WTC11 (cell line): ENCODE measurements at regions of chr9 and their contacts with region 1.

Region 1: DNA sequence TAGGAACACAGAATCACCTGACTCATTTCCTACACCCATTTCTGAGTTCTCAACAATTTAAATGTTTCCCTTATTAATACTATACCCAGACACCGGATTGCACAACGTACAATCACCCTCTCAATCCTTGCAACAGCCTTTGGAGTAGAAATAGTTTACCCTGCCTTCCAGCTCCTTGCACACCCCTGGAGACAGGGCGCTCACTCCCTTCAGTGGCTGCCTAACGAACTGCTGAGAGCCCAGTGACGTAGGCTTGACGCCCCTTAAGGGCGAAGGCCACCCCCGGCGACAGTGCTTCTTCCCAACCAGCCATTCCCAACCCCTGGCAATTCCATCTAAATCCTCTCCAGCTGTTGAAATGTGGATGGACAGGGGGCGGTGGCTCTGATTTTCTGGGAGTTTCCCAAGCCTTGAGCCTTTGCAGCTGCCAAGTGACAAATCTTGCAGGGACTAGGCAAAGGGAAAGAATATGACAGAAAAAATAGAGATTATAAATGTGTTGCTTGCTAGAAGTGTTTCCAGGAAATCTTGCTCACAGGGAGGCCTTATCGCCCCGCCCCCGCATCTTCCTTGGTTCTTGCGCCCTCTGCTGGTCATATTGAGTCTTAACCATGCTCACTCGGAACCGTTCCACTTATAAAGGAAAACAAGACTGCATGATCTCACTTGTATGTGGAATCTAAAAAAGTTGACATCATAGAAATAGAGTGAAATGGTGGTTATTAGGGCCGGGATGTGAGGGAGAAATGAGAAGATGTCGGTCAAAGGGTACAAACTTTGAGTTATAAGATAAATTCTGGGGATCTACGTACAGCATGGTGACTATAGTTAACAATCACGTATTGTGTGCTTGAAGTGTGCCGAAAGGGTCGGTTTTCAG is 7.6 kb upstream of the BARX1 start:
- DNase-seq: peak; percentile 70
- ATAC-seq: peak; percentile 16; the same call in 1 of the 2 replicates
- H3K4me3 Mint-ChIP-seq: no peak overlapping the region
- H3K27ac Mint-ChIP-seq: no peak overlapping the region
- H3K4me1 Mint-ChIP-seq: peaks cover 30% of the 10 kb centered on the region
- H3K27me3 Mint-ChIP-seq: peaks cover 53% of the 10 kb centered on the region
- CTCF ChIP-seq: peak; percentile 88

Region 2: GRCh38 chr9:93682232-93682968 is 280.4 kb before region 1 on chr9:
- CTCF ChIA-PET with region 1: interaction called, 25 read pairs
- POLR2A ChIA-PET with region 1: no interaction called
- DNase-seq: peak; percentile 94
- ATAC-seq: peak; percentile 76
- H3K4me3 Mint-ChIP-seq: no peak overlapping the region
- H3K27ac Mint-ChIP-seq: 0 out of 2 replicates have a peak overlapping the region, but pooled peaks have one; percentile 21
- H3K4me1 Mint-ChIP-seq: peaks cover 3% of the 10 kb centered on the region
- H3K27me3 Mint-ChIP-seq: no peaks in the 10 kb centered on the region
- CTCF ChIP-seq: peak; percentile 89

Region 3: GRCh38 chr9:93945400-93946337 is 17.1 kb before region 1 on chr9:
- CTCF ChIA-PET with region 1: interaction called, 30 read pairs
- POLR2A ChIA-PET with region 1: interaction called, 7 read pairs
- DNase-seq: no peak
- ATAC-seq: no peak; the same call in 1 of the 2 replicates
- H3K4me3 Mint-ChIP-seq: peak overlapping the region; percentile 69
- H3K27ac Mint-ChIP-seq: no peak overlapping the region
- H3K4me1 Mint-ChIP-seq: peaks cover 58% of the 10 kb centered on the region
- H3K27me3 Mint-ChIP-seq: peaks cover 99% of the 10 kb centered on the region
- CTCF ChIP-seq: no peak

Region 4: GRCh38 chr9:93978551-93978950 is 15.8 kb after region 1 on chr9:
- CTCF ChIA-PET with region 1: interaction called, 10 read pairs
- POLR2A ChIA-PET with region 1: no interaction called
- DNase-seq: no peak
- ATAC-seq: no peak
- H3K4me3 Mint-ChIP-seq: no peak overlapping the region
- H3K27ac Mint-ChIP-seq: no peak overlapping the region
- H3K4me1 Mint-ChIP-seq: 0 out of 2 replicates have a peak, but pooled peaks cover under 1% of the 10 kb centered on the region
- H3K27me3 Mint-ChIP-seq: no peaks in the 10 kb centered on the region
- CTCF ChIP-seq: no peak

Region 5: GRCh38 chr9:94065535-94065961 is 102.7 kb after region 1 on chr9:
- CTCF ChIA-PET with region 1: no interaction called
- POLR2A ChIA-PET with region 1: no interaction called
- DNase-seq: peak; percentile 78
- ATAC-seq: peak; percentile 87
- H3K4me3 Mint-ChIP-seq: no peak overlapping the region
- H3K27ac Mint-ChIP-seq: no peak overlapping the region; the same call in 1 of the 2 replicates
- H3K4me1 Mint-ChIP-seq: peaks cover 5% of the 10 kb centered on the region
- H3K27me3 Mint-ChIP-seq: no peaks in the 10 kb centered on the region
- CTCF ChIP-seq: peak; percentile 84

Region 6: DNA sequence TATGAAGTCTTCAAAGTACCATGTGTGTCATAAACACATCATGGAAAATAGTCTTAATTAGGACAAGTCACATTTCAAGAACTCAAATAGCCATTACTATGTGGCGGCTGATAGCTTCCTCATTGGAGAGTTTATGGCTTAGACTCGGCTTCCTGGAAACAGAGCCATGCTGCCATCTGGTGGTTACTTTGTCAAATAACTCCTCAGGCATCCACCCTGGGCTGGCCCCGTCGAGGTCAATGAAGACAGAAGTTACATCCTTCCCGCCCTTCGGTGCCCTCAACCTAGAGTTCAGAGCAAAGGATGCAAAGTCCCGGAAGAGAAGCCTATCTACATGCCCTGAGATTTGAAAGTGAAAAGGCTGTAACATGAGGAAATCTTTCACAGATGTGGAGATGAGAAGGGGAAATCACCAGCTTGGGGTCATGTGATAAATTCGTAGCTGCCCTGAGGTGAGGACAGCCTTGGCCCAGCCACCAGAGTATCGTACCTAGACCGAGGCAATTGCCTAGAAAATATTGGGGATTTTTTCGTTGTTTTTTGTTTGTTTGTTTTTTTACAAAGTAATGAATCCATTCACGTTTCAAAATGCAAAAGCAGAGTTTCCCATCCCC is 250.8 kb after region 1 on chr9:
- CTCF ChIA-PET with region 1: interaction called, 24 read pairs
- POLR2A ChIA-PET with region 1: no interaction called
- DNase-seq: peak; percentile 81
- ATAC-seq: peak; percentile 88
- H3K4me3 Mint-ChIP-seq: no peak overlapping the region
- H3K27ac Mint-ChIP-seq: no peak overlapping the region
- H3K4me1 Mint-ChIP-seq: peaks cover 20% of the 10 kb centered on the region
- H3K27me3 Mint-ChIP-seq: peaks cover 11% of the 10 kb centered on the region
- CTCF ChIP-seq: peak; percentile 61